Gastrocnemius medialis (tissue), 4 donors: ENCODE measurements at regions of chr1 and their contacts with region 1.

Region 1: GRCh38 chr1:3453203-3453761 is 1.2 kb upstream of the ARHGEF16 start:
- DNase-seq: peak; percentile 30 to 62
- ATAC-seq: peak; percentile 51 to 76
- H3K4me3 ChIP-seq: no peak overlapping the region
- H3K27ac ChIP-seq: no peak overlapping the region
- H3K4me1 ChIP-seq: peaks cover 10 to 20% of the 10 kb centered on the region in 2 donors
- H3K27me3 ChIP-seq: peaks cover 0 to 7% (median 2%) of the 10 kb centered on the region in 3 donors
- CTCF ChIP-seq: peak; percentile 89 to 97 (median 94)
- POLR2A ChIP-seq: no peak

Region 2: GRCh38 chr1:3471302-3472087 is 18.2 kb after region 1 on chr1:
- in situ Hi-C with region 1: no loop called
- intact Hi-C with region 1: loop called (anchors 1 kb)
- DNase-seq: peak; percentile 36 to 54
- ATAC-seq: peak; percentile 71 to 81
- H3K4me3 ChIP-seq: no peak overlapping the region
- H3K27ac ChIP-seq: peak overlapping the region in 1 of 4 donors; percentile 22
- H3K4me1 ChIP-seq: no peaks in the 10 kb centered on the region
- H3K27me3 ChIP-seq: no peaks in the 10 kb centered on the region
- CTCF ChIP-seq: peak; percentile 44 to 70 (median 64)
- POLR2A ChIP-seq: no peak

Region 3: DNA sequence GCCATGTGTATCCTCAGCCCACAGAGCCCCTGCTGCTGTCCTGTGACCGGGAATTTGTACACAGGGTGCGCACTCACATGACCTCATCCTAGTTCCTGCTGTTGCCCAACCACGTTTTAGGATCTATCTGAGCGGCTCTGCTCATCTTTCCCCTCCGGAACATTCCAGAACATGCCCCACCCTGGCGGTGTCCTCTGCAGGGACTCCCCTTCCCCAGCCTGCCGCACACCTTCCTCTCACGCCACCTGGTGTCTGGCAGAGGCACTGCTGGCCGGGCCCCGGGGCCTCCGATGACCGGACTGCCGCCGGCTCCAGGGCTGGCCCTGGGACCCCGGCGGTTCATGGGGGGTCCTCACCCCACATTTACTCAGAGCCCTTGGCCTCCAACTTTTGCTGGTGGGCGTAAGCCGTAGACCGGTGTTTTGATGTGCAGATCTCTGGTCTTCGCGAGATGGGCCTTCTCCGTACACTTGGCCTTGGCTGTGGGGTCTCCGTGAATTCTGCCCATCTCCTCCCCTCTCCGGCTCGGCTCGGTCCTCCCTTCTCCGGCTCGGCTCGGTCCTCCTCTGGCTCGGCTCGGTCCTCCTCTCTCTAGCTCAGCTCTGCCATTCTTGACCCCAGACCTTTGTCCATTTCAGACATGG is 30.6 kb after region 1 on chr1:
- in situ Hi-C with region 1: no loop called
- intact Hi-C with region 1: loop called (anchors 1 kb)
- DNase-seq: no peak
- ATAC-seq: peak; percentile 48 to 73
- H3K4me3 ChIP-seq: no peak overlapping the region
- H3K27ac ChIP-seq: no peak overlapping the region
- H3K4me1 ChIP-seq: no peaks in the 10 kb centered on the region
- H3K27me3 ChIP-seq: peaks cover 0 to 5% (median 0%) of the 10 kb centered on the region in 3 donors
- CTCF ChIP-seq: peak; percentile 73 to 94 (median 90)
- POLR2A ChIP-seq: no peak

Region 4: DNA sequence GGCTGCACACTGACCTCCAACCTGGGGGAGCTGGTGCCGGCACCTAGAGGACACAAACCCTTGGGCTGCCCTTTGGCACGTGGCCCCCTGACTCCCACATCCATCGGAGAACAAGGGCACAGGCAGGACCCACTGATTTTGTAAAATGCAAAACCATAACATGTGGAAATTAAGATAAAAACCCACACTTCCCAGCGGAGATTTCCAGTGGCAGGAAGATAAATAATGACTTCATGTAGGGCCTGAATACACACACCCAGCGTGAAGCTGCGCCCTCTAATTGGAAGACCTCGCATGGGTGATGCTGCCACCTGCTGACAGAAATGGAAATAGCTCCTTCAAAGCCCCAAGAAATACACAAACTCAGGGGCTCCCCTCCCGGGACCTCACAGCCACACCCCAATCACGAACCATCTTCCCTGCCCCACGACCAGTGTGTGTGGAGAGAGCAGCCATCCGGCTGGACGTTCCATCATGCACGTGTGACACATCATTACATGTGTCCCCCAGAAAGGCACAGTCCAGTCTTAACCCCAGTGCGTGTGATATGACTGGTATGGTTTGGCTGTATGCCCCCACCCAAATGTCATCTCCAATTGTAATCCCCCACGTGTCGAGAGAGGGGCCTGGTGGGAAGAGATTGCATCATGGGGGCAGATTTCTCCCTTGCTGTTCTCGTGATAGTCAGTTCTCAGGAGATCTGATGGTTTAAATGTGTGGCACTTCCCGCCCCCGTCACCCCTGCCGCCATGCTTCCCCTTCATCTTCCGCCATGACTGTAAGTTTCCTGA is 165.8 kb after region 1 on chr1:
- in situ Hi-C with region 1: no loop called
- intact Hi-C with region 1: loop called (anchors 1 kb)
- DNase-seq: peak; percentile 32 to 46
- ATAC-seq: peak; percentile 60 to 83
- H3K4me3 ChIP-seq: no peak overlapping the region
- H3K27ac ChIP-seq: no peak overlapping the region
- H3K4me1 ChIP-seq: peaks cover 14 to 16% of the 10 kb centered on the region in 2 donors
- H3K27me3 ChIP-seq: no peaks in the 10 kb centered on the region
- CTCF ChIP-seq: peak; percentile 66 to 91 (median 84)
- POLR2A ChIP-seq: no peak

Region 5: DNA sequence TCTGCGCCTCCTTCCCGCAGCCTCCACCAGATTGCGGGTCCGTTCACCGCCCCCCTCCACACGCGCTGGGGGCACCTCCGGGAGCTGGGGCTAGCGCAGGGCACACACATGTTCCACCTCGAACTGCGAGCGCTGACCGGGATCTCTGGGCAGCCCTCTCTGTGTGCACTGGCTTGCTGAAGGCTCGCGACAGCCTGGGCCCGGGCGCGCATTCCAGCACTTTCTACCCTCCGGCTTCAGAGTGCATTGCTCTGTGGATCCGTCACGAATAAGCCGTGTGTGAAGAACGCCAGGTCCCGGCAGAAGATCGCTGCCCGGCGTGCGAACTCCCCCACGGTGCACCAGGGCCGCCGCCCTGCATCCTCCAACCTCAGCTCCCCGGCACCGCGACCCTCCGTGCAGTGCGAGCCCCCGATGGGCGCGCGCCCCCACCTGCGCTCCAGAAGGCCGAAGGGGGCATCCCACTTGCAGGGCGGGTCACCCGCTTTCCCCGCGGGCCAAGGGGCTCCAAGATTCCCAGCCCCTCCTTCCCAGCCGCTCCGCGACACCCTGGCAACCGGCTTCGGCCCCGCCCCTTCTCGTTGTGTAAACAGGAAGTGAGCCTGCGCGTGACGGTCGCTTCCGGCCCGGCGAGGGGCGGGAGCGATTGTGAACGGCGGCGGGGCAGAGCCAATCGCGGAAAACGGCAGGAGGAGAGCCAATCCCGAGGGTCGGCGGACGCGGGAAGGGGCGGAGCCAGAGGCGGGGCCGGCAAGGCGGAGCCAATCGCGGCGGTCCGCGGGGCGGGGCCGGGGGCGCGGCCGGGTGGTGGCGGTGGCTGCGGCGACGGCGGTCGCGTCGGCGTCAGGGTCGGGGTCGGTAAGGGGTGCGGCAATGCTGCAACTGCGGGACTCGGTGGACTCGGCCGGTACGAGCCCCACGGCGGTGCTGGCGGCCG is 171.2 kb after region 1 on chr1 and contains the start of gene TPRG1L:
- in situ Hi-C with region 1: no loop called
- intact Hi-C with region 1: loop called (anchors 1 kb)
- DNase-seq: peak; percentile 96 to 97
- ATAC-seq: peak; percentile 97 to 98
- H3K4me3 ChIP-seq: peak within 1 kb of the TSS; percentile 91 to 100 (median 96)
- H3K27ac ChIP-seq: peak within 1 kb of the TSS; percentile 59 to 91 (median 83)
- H3K4me1 ChIP-seq: peaks cover 21 to 23% of the 10 kb centered on the region in 2 donors
- H3K27me3 ChIP-seq: no peaks in the 10 kb centered on the region
- CTCF ChIP-seq: no peak
- POLR2A ChIP-seq: peak; percentile 49 to 67
- total RNA-seq, gene TPRG1L: 25.3 to 38.7 (median 30.0) TPM